Caco-2 (cell line): ENCODE measurements at regions of chr3 and their contacts with region 1.

Region 1: GRCh38 chr3:32794487-32795308 is 23.1 kb upstream of the TRIM71 start:
- DNase-seq: peak; percentile 83 to 87
- H3K4me3 ChIP-seq: no peak overlapping the region
- H3K4me3 Mint-ChIP-seq: peak overlapping the region; percentile 8
- H3K27ac Mint-ChIP-seq: peak overlapping the region; percentile 55
- H3K4me1 ChIP-seq: peaks cover 43% of the 10 kb centered on the region
- H3K4me1 Mint-ChIP-seq: peaks cover 39% of the 10 kb centered on the region
- H3K27me3 ChIP-seq: no peaks in the 10 kb centered on the region
- H3K27me3 Mint-ChIP-seq: no peaks in the 10 kb centered on the region
- CTCF ChIP-seq: no peak

Region 2: GRCh38 chr3:32816439-32817256 is 21.9 kb after region 1 on chr3:
- CTCF ChIA-PET with region 1: no interaction called
- POLR2A ChIA-PET with region 1: interaction called, 3 read pairs
- intact Hi-C with region 1: loop called (anchors 2 kb)
- DNase-seq: peak; percentile 76 to 91
- H3K4me3 ChIP-seq: peak overlapping the region; percentile 78
- H3K4me3 Mint-ChIP-seq: peak overlapping the region; percentile 86
- H3K27ac Mint-ChIP-seq: peak overlapping the region; percentile 93
- H3K4me1 ChIP-seq: peaks cover 31% of the 10 kb centered on the region
- H3K4me1 Mint-ChIP-seq: peaks cover 15% of the 10 kb centered on the region
- H3K27me3 ChIP-seq: no peaks in the 10 kb centered on the region
- H3K27me3 Mint-ChIP-seq: no peaks in the 10 kb centered on the region
- CTCF ChIP-seq: no peak

Region 3: GRCh38 chr3:32842531-32842931 is 47.8 kb after region 1 on chr3:
- CTCF ChIA-PET with region 1: no interaction called
- POLR2A ChIA-PET with region 1: no interaction called
- intact Hi-C with region 1: loop called (anchors 1 kb)
- DNase-seq: no peak
- H3K4me3 ChIP-seq: no peak overlapping the region
- H3K4me3 Mint-ChIP-seq: peak overlapping the region; percentile 24
- H3K27ac Mint-ChIP-seq: peak overlapping the region; percentile 50
- H3K4me1 ChIP-seq: peaks cover 81% of the 10 kb centered on the region
- H3K4me1 Mint-ChIP-seq: peaks cover 43% of the 10 kb centered on the region
- H3K27me3 ChIP-seq: no peaks in the 10 kb centered on the region
- H3K27me3 Mint-ChIP-seq: no peaks in the 10 kb centered on the region
- CTCF ChIP-seq: no peak